Body of pancreas (tissue), 4 donors: ENCODE measurements at regions of chr19 and their contacts with region 1.

Region 1: GRCh38 chr19:46088101-46088500 is 36.4 kb downstream of the IGFL3 start:
- DNase-seq: no peak
- ATAC-seq: no peak
- H3K4me3 ChIP-seq: no peak overlapping the region
- H3K27ac ChIP-seq: no peak overlapping the region
- H3K4me1 ChIP-seq: no peaks in the 10 kb centered on the region
- H3K27me3 ChIP-seq: no peaks in the 10 kb centered on the region
- CTCF ChIP-seq: no peak
- POLR2A ChIP-seq: no peak

Region 2: GRCh38 chr19:46192992-46193650 is 105.0 kb after region 1 on chr19:
- intact Hi-C with region 1: loop called (anchors 5 kb)
- DNase-seq: peak in 1 of 4 donors; percentile 50
- ATAC-seq: no peak
- H3K4me3 ChIP-seq: no peak overlapping the region
- H3K27ac ChIP-seq: no peak overlapping the region
- H3K4me1 ChIP-seq: no peaks in the 10 kb centered on the region
- H3K27me3 ChIP-seq: peaks cover 0 to 14% of the 10 kb centered on the region in 2 donors
- CTCF ChIP-seq: no peak
- POLR2A ChIP-seq: no peak